ENCODE measurements at regions of chr2 and their contacts with region 1.

Region 1: GRCh38 chr2:119223521-119224390 is at the start of gene STEAP3:
- DNase-seq: peak; percentile 38
- ATAC-seq: peak; percentile 73
- H3K4me3 Mint-ChIP-seq: peak within 1 kb of the TSS; percentile 62
- H3K27ac Mint-ChIP-seq: no peak within 1 kb of the TSS
- H3K4me1 Mint-ChIP-seq: peaks cover 4% of the 10 kb centered on the region
- H3K27me3 Mint-ChIP-seq: peaks cover 20% of the 10 kb centered on the region
- CTCF ChIP-seq: no peak
- total RNA-seq, gene STEAP3: 1.1 and 1.2 TPM in 2 replicates

Region 2: GRCh38 chr2:119264781-119265692 is 41.3 kb after region 1 on chr2:
- CTCF ChIA-PET with region 1: no interaction called
- POLR2A ChIA-PET with region 1: no interaction called
- intact Hi-C with region 1: loop called (anchors 2 kb)
- DNase-seq: no peak
- ATAC-seq: peak; percentile 56
- H3K4me3 Mint-ChIP-seq: no peak overlapping the region
- H3K27ac Mint-ChIP-seq: no peak overlapping the region
- H3K4me1 Mint-ChIP-seq: no peaks in the 10 kb centered on the region
- H3K27me3 Mint-ChIP-seq: peaks cover 2% of the 10 kb centered on the region
- CTCF ChIP-seq: no peak

Region 3: GRCh38 chr2:119476301-119477021 is 252.7 kb after region 1 on chr2:
- CTCF ChIA-PET with region 1: no interaction called
- POLR2A ChIA-PET with region 1: no interaction called
- intact Hi-C with region 1: loop called (anchors 10 kb)
- DNase-seq: peak; percentile 37
- ATAC-seq: peak; percentile 78
- H3K4me3 Mint-ChIP-seq: no peak overlapping the region
- H3K27ac Mint-ChIP-seq: no peak overlapping the region
- H3K4me1 Mint-ChIP-seq: no peaks in the 10 kb centered on the region
- H3K27me3 Mint-ChIP-seq: peaks cover 5% of the 10 kb centered on the region
- CTCF ChIP-seq: peak; percentile 49

Measured in activated B cell treated with CpG ODN at 0.5 μM for 24 hours (primary cell).